ENCODE measurements at regions of chr16 and their contacts with region 1.

Region 1: DNA sequence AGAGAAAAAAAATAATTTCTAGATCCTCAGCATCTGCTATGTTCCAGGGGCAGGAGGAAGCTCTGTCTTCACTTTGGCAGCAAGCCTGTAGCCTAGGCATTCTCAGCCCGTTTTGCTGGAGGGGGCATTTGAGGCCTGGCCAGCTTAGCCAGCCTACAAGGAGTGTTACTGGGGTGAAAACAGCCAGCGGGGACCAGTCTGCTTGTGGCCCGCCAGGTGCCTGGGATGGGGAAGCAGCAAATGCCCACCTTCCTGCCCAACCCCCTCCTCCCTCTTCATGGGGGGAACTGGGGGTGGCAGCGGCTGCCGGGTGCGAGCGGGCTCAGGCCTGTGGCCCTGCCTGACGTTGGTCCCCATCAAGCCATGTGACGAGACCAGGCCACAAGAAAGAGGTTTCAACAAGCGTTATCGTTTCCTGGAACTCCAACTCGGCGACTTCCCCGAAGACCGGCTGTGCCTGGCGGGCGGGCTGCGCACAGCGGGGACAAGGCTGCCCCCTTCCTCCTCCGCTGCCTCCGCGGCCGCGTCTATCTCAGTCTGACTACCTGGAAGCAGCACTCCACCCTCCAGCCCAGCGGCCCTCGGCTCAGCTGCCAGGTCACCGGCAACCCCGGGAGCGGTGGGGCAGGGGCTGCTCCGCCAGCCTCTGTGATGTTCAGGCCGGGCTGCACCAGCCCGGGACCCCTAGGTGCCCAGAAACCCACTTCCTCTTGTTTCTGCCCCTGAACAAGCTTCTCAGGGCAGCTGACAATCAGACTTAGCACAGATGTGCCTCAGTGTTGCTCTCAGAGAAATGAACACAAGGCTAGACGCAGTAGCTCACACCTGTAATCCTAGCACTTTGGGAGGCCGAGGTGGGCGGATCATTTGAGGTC is 22.9 kb downstream of the SOCS1 start:
- DNase-seq: peak; percentile 91
- H3K4me3 Mint-ChIP-seq: peak overlapping the region; percentile 56
- H3K27ac Mint-ChIP-seq: peak overlapping the region; percentile 98
- H3K4me1 Mint-ChIP-seq: peaks cover 76% of the 10 kb centered on the region
- H3K27me3 Mint-ChIP-seq: no peaks in the 10 kb centered on the region

Region 2: GRCh38 chr16:11094072-11094856 is 138.8 kb before region 1 on chr16:
- intact Hi-C with region 1: loop called (anchors 1 kb)
- DNase-seq: peak; percentile 67
- H3K4me3 Mint-ChIP-seq: peak overlapping the region; percentile 50
- H3K27ac Mint-ChIP-seq: peak overlapping the region; percentile 98
- H3K4me1 Mint-ChIP-seq: peaks cover 75% of the 10 kb centered on the region
- H3K27me3 Mint-ChIP-seq: no peaks in the 10 kb centered on the region

Region 3: GRCh38 chr16:11155284-11155806 is 77.7 kb before region 1 on chr16:
- intact Hi-C with region 1: loop called (anchors 1 kb)
- DNase-seq: peak; percentile 47
- H3K4me3 Mint-ChIP-seq: peak overlapping the region; percentile 42
- H3K27ac Mint-ChIP-seq: peak overlapping the region; percentile 89
- H3K4me1 Mint-ChIP-seq: peaks cover 64% of the 10 kb centered on the region
- H3K27me3 Mint-ChIP-seq: no peaks in the 10 kb centered on the region

Region 4: DNA sequence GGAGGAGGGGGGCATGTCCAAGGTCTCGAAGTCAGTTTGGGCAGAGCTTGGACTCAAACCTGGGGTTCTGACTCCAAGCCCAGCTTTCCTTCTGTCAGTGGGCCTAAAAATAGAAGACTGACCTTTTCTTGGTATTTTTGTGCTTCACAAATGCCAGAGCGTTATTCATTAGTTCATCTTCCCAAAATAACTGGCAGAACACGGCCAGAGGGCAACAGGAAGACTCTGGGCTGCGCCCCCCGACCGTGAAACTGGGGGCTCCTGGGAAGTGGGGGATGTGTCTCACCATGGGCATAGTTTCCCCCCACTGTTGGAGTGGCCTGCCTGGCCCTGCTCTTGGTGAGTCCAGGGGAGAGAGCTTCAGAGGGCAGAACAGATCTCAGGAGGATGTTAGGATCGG is 71.1 kb before region 1 on chr16:
- intact Hi-C with region 1: loop called (anchors 1 kb)
- DNase-seq: no peak
- H3K4me3 Mint-ChIP-seq: no peak overlapping the region
- H3K27ac Mint-ChIP-seq: peak overlapping the region; percentile 90
- H3K4me1 Mint-ChIP-seq: peaks cover 65% of the 10 kb centered on the region
- H3K27me3 Mint-ChIP-seq: no peaks in the 10 kb centered on the region

Measured in activated T-helper 2 cell treated with anti-CD3 and anti-CD28 coated beads, Interferon-gamma antibody, Interleukin-2, Interleukin-4, amounts not matched to agents 10 μg/mL and 5 μg/mL and 100 μg/mL, durations not matched to agents 14 hours and 24 hours and 36 hours (primary cell).